ENCODE measurements at regions of chr20 and their contacts with region 1.

Region 1: GRCh38 chr20:31738729-31739561 is at the start of gene TPX2:
- DNase-seq: peak; percentile 86
- H3K4me3 Mint-ChIP-seq: no peak within 1 kb of the TSS
- H3K27ac Mint-ChIP-seq: no peak within 1 kb of the TSS
- H3K4me1 Mint-ChIP-seq: peaks cover 9% of the 10 kb centered on the region
- H3K27me3 Mint-ChIP-seq: no peaks in the 10 kb centered on the region
- total RNA-seq, gene TPX2: 137 to 138 TPM

Region 2: DNA sequence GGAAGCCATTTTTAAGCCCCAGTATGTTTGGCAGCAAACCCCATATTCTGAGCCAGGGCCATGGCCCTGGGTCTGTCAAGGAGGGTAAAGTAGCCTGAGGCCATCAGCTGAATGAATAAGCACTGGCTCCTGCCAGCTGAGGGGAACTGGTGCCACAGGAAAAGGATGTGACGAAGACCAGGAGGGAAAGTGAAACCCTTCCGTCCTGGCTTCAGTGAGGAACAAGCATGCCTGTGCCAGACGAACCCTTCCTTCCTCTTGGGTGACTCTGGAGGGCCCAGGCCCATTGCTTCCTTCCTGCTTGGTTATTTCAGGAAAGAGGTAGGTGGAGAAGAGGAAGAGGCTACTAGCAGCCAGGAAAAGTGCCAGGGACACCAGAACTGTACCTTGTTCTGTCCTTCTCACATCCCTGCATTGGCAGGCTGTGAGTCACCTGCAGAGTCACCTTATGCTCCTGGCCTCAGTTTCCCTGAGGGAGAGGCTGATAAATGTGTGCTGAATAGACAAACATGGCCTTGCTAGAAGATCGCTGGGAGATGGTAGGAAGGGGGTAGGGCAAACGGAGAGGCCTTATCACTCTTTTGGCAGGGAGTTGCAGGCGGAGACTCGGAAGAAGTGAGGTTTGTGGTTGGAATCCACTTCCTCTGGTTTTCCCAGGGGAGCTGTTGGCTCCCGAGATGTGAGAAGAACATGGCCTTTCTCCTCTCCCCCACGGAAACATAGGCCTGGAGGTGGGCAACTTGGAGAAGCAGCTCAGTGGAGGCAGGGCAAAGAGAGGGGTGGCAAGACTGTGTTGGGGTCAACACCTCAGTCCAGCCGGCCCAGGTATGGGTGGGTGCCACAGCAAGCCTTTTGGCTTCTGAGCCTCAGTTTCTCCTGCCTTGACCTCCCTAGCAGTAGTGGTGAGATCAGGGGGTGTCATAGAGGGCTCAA is 63.8 kb before region 1 on chr20:
- CTCF ChIA-PET with region 1: no interaction called
- POLR2A ChIA-PET with region 1: interaction called, 19 read pairs
- DNase-seq: peak; percentile 84
- H3K4me3 Mint-ChIP-seq: peak overlapping the region; percentile 76
- H3K27ac Mint-ChIP-seq: peak overlapping the region; percentile 93
- H3K4me1 Mint-ChIP-seq: peaks cover 86% of the 10 kb centered on the region
- H3K27me3 Mint-ChIP-seq: no peaks in the 10 kb centered on the region

Region 3: DNA sequence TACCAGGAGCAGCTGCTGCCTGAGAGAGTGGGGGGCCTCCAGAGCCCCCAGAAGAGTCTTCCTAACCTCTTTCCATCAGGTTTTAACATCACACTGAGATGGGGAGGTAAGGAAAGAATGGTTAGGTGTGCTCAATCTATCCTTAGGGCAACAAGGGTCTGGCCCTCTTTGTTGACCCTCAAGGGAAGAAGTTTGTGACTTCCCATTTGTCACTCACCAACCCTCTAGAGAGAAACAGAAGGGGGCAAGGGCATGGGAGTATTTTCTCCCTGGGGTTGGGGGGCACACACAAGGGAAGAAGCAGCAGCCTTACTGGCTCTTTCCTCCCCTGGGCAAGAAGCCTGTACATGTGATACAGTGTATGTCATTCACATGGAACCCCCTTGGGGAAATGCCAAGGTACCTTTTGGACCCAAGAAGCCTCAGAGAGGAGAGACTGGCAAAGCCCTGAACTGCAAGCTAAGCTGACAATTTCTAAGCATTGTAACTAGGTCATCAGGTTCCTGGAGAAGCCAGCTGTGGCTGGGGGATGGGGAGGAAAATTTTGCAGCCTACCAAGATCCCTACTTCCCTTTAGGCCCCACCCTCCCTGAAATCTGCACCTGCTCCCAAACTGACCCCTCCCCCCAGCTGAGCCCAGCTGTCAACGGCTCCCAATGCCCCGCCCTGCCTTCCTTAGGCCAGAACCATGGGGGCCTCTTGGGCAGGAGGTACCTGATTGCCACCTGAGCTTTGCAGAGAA is 30.8 kb before region 1 on chr20:
- CTCF ChIA-PET with region 1: no interaction called
- POLR2A ChIA-PET with region 1: no interaction called
- DNase-seq: no peak
- H3K4me3 Mint-ChIP-seq: no peak overlapping the region
- H3K27ac Mint-ChIP-seq: peak overlapping the region; percentile 65
- H3K4me1 Mint-ChIP-seq: peaks cover 79% of the 10 kb centered on the region
- H3K27me3 Mint-ChIP-seq: no peaks in the 10 kb centered on the region

Measured in activated CD4-positive, alpha-beta memory T cell treated with anti-CD3 and anti-CD28 coated beads, Interleukin-2, amount 10 ng/mL, durations not matched to agents 7 days and 5 days (primary cell).